ENCODE measurements at regions of chr9 and their contacts with region 1.

Region 1: GRCh38 chr9:23587433-23587832 is 238.6 kb downstream of the ELAVL2 start:
- DNase-seq: no peak
- ATAC-seq: no peak
- H3K4me3 Mint-ChIP-seq: no peak overlapping the region
- H3K27ac Mint-ChIP-seq: no peak overlapping the region
- H3K4me1 Mint-ChIP-seq: peaks cover 5% of the 10 kb centered on the region
- H3K27me3 Mint-ChIP-seq: no peaks in the 10 kb centered on the region
- CTCF ChIP-seq: no peak

Region 2: GRCh38 chr9:22229069-22229468 is 1358.4 kb before region 1 on chr9:
- CTCF ChIA-PET with region 1: no interaction called
- POLR2A ChIA-PET with region 1: interaction called, 16 read pairs
- intact Hi-C with region 1: no loop called
- DNase-seq: no peak
- ATAC-seq: no peak
- H3K4me3 Mint-ChIP-seq: no peak overlapping the region
- H3K27ac Mint-ChIP-seq: no peak overlapping the region
- H3K4me1 Mint-ChIP-seq: peaks cover 4% of the 10 kb centered on the region
- H3K27me3 Mint-ChIP-seq: peaks cover 7% of the 10 kb centered on the region
- CTCF ChIP-seq: no peak